CD14-positive monocyte (primary cell): ENCODE measurements at regions of chr2 and their contacts with region 1.

Region 1: GRCh38 chr2:170815746-170816503 is 762 bp upstream of the GAD1 start:
- DNase-seq: peak; percentile 37 to 54 (median 42)
- H3K4me3 ChIP-seq: peak overlapping the region; percentile 29 to 71 (median 30)
- H3K4me3 Mint-ChIP-seq: peak overlapping the region; percentile 75 to 86
- H3K27ac ChIP-seq: no peak overlapping the region
- H3K27ac Mint-ChIP-seq: peak overlapping the region in 1 of 7 donors; percentile 33
- H3K4me1 ChIP-seq: peaks cover 40 to 45% of the 10 kb centered on the region in 2 donors
- H3K4me1 Mint-ChIP-seq: peaks cover 50% of the 10 kb centered on the region
- H3K27me3 ChIP-seq: peaks cover 74 to 88% of the 10 kb centered on the region in 2 donors
- H3K27me3 Mint-ChIP-seq: peaks cover 80 to 93% (median 87%) of the 10 kb centered on the region in 3 donors
- CTCF ChIP-seq: peak; percentile 71

Region 2: DNA sequence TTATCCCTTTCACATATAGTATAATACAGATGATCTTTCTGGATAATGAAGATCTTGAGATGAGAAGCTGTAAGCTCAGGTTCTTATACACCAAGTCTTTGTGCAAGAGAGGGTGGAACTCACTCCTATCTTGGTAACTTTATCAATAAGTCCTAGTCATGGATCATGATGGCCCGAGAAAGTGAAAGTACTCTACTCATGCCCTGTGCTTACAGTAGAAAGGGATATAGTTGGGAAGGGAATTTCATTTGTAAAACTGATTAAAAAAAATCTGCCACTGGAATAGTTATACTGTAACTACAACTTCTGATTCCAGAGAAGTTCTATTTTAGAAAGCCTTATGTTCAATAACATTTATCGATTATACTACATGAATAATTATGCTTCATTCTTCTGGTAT is 586.2 kb before region 1 on chr2:
- intact Hi-C with region 1: loop called in 1 of 2 experiments (anchors 5 kb)
- DNase-seq: no peak
- H3K4me3 ChIP-seq: no peak overlapping the region
- H3K4me3 Mint-ChIP-seq: no peak overlapping the region
- H3K27ac ChIP-seq: no peak overlapping the region
- H3K27ac Mint-ChIP-seq: no peak overlapping the region
- H3K4me1 ChIP-seq: no peaks in the 10 kb centered on the region
- H3K4me1 Mint-ChIP-seq: no peaks in the 10 kb centered on the region
- H3K27me3 ChIP-seq: no peaks in the 10 kb centered on the region
- H3K27me3 Mint-ChIP-seq: peaks cover 0 to 6% (median 1%) of the 10 kb centered on the region in 3 donors
- CTCF ChIP-seq: no peak

Region 3: GRCh38 chr2:170361090-170361936 is 454.6 kb before region 1 on chr2:
- intact Hi-C with region 1: loop called in 1 of 2 experiments (anchors 2 kb)
- DNase-seq: peak; percentile 10 to 19 (median 14)
- H3K4me3 ChIP-seq: no peak overlapping the region
- H3K4me3 Mint-ChIP-seq: peak overlapping the region in 1 of 2 donors; percentile 28
- H3K27ac ChIP-seq: no peak overlapping the region
- H3K27ac Mint-ChIP-seq: no peak overlapping the region
- H3K4me1 ChIP-seq: no peaks in the 10 kb centered on the region
- H3K4me1 Mint-ChIP-seq: peaks cover 3% of the 10 kb centered on the region
- H3K27me3 ChIP-seq: peaks cover 20 to 36% of the 10 kb centered on the region in 2 donors
- H3K27me3 Mint-ChIP-seq: peaks cover 14 to 23% (median 18%) of the 10 kb centered on the region in 3 donors
- CTCF ChIP-seq: peak; percentile 72

Region 4: GRCh38 chr2:170409164-170409535 is 406.8 kb before region 1 on chr2:
- intact Hi-C with region 1: loop called in 1 of 2 experiments (anchors 10 kb)
- DNase-seq: peak; percentile 52 to 77 (median 60)
- H3K4me3 ChIP-seq: peak overlapping the region in 1 of 3 experiments; percentile 44
- H3K4me3 Mint-ChIP-seq: peak overlapping the region; percentile 34 to 80
- H3K27ac ChIP-seq: no peak overlapping the region
- H3K27ac Mint-ChIP-seq: peak overlapping the region in 3 of 7 donors; percentile 3 to 24 (median 15)
- H3K4me1 ChIP-seq: peaks cover 13 to 24% of the 10 kb centered on the region in 2 donors
- H3K4me1 Mint-ChIP-seq: peaks cover 24% of the 10 kb centered on the region
- H3K27me3 ChIP-seq: peaks cover 29 to 51% of the 10 kb centered on the region in 2 donors
- H3K27me3 Mint-ChIP-seq: peaks cover 27 to 57% (median 45%) of the 10 kb centered on the region in 3 donors
- CTCF ChIP-seq: peak; percentile 97

Region 5: GRCh38 chr2:171482877-171483276 is 667.0 kb after region 1 on chr2:
- intact Hi-C with region 1: no loop called
- DNase-seq: no peak
- H3K4me3 ChIP-seq: no peak overlapping the region
- H3K4me3 Mint-ChIP-seq: no peak overlapping the region
- H3K27ac ChIP-seq: no peak overlapping the region
- H3K27ac Mint-ChIP-seq: no peak overlapping the region
- H3K4me1 ChIP-seq: no peaks in the 10 kb centered on the region
- H3K4me1 Mint-ChIP-seq: peaks cover 10% of the 10 kb centered on the region
- H3K27me3 ChIP-seq: no peaks in the 10 kb centered on the region
- H3K27me3 Mint-ChIP-seq: no peaks in the 10 kb centered on the region
- CTCF ChIP-seq: no peak